ENCODE measurements at regions of chr10 and their contacts with region 1.

Region 1: GRCh38 chr10:96890172-96890513 is 58.0 kb downstream of the LCOR start:
- DNase-seq: no peak
- ATAC-seq: no peak
- H3K4me3 ChIP-seq: no peak overlapping the region
- H3K27ac ChIP-seq: no peak overlapping the region
- H3K4me1 ChIP-seq: 0 out of 2 replicates have a peak, but pooled peaks cover 1% of the 10 kb centered on the region
- H3K27me3 ChIP-seq: no peaks in the 10 kb centered on the region
- CTCF ChIP-seq: no peak
- POLR2A ChIP-seq: no peak
- RAD21 ChIP-seq: no peak

Region 2: GRCh38 chr10:96858038-96858705 is 32.0 kb before region 1 on chr10:
- CTCF ChIA-PET with region 1: no interaction called
- POLR2A ChIA-PET with region 1: no interaction called
- dilution Hi-C with region 1: no loop called
- in situ Hi-C with region 1: loop called (anchors 5 kb)
- intact Hi-C with region 1: loop called (anchors 5 kb)
- DNase-seq: peak; percentile 25
- ATAC-seq: peak; percentile 59
- H3K4me3 ChIP-seq: no peak overlapping the region
- H3K27ac ChIP-seq: no peak overlapping the region
- H3K4me1 ChIP-seq: peaks cover 5% of the 10 kb centered on the region; the same call in 1 of the 2 replicates
- H3K27me3 ChIP-seq: no peaks in the 10 kb centered on the region
- CTCF ChIP-seq: no peak
- POLR2A ChIP-seq: no peak
- RAD21 ChIP-seq: no peak

Region 3: GRCh38 chr10:97318772-97319651 is 428.9 kb after region 1 on chr10 and contains the start of gene FRAT1:
- CTCF ChIA-PET with region 1: no interaction called
- POLR2A ChIA-PET with region 1: no interaction called
- dilution Hi-C with region 1: no loop called
- in situ Hi-C with region 1: no loop called
- intact Hi-C with region 1: no loop called
- DNase-seq: peak; percentile 93
- ATAC-seq: peak; percentile 92
- H3K4me3 ChIP-seq: peak within 1 kb of the TSS; percentile 92
- H3K27ac ChIP-seq: peak within 1 kb of the TSS; percentile 100
- H3K4me1 ChIP-seq: peaks cover 8% of the 10 kb centered on the region; the same call in 1 of the 2 replicates
- H3K27me3 ChIP-seq: no peaks in the 10 kb centered on the region
- CTCF ChIP-seq: no peak
- POLR2A ChIP-seq: peak; percentile 88
- RAD21 ChIP-seq: no peak
- total RNA-seq, gene FRAT1: 0.54 and 0.83 TPM in 2 replicates

Measured in IMR-90 (cell line).